IMR-90 (cell line): ENCODE measurements at regions of chr10 and their contacts with region 1.

Region 1: GRCh38 chr10:99854860-99855259 is 72.4 kb downstream of the ABCC2 start:
- DNase-seq: peak; percentile 83
- ATAC-seq: peak; percentile 82
- H3K4me3 ChIP-seq: no peak overlapping the region
- H3K27ac ChIP-seq: no peak overlapping the region
- H3K4me1 ChIP-seq: no peaks in the 10 kb centered on the region; the same call in 1 of the 2 replicates
- H3K27me3 ChIP-seq: peaks cover 2% of the 10 kb centered on the region
- CTCF ChIP-seq: peak; percentile 77
- POLR2A ChIP-seq: no peak
- RAD21 ChIP-seq: peak; percentile 86

Region 2: GRCh38 chr10:99966306-99966705 is 111.4 kb after region 1 on chr10:
- CTCF ChIA-PET with region 1: interaction called, 5 read pairs
- POLR2A ChIA-PET with region 1: no interaction called
- dilution Hi-C with region 1: no loop called
- in situ Hi-C with region 1: no loop called
- intact Hi-C with region 1: loop called (anchors 2 kb)
- DNase-seq: peak; percentile 78
- ATAC-seq: peak; percentile 66
- H3K4me3 ChIP-seq: no peak overlapping the region
- H3K27ac ChIP-seq: no peak overlapping the region
- H3K4me1 ChIP-seq: peaks cover 5% of the 10 kb centered on the region
- H3K27me3 ChIP-seq: no peaks in the 10 kb centered on the region
- CTCF ChIP-seq: no peak
- POLR2A ChIP-seq: no peak
- RAD21 ChIP-seq: no peak

Region 3: DNA sequence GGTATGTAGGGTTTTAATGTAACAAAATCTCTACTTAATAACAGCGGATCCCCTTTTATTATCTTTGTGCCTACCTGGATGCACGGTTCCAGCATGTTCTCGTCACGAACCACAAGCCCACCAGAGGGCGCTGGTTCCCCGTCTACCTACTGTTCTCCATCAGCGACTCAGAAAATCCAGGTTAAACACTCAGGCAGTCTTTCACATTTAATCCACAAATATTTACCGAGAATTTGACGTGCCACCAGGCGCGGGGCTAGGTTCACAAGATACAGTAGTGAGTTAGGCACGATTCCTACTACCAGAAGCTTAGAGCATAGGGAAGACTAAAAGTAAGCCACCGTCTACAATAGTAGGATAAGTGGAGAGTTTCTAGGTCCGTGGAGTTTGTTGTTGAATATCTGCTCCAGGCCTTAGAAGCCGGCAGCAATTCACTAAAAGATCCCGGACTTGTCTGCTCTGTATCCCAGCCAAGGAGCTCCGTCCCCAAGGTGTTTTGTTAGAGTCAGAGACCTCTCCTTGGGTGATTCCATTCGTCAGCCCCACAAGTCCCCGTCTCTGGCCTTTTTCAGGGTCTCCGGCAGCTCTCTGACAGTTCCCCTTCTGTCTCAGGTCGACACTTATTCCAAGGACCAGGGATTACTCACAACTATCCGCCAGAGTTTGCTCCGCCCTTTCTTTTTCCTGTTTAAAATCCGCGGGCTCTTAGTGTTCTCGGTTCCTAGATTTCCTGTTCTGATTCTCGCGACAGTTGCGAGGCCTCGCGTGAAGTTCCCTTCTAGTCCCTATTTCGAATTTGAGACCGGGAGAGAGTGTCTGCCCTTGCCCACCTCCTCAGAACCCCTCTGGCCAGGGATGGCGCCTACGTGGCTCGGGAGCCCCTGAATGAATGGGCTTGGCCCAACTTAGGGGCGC is 1205.4 kb after region 1 on chr10:
- CTCF ChIA-PET with region 1: no interaction called
- POLR2A ChIA-PET with region 1: interaction called, 15 read pairs
- dilution Hi-C with region 1: no loop called
- in situ Hi-C with region 1: no loop called
- intact Hi-C with region 1: no loop called
- DNase-seq: peak; percentile 95
- ATAC-seq: peak; percentile 68
- H3K4me3 ChIP-seq: peak overlapping the region; percentile 81
- H3K27ac ChIP-seq: peak overlapping the region; percentile 97
- H3K4me1 ChIP-seq: peaks cover 15% of the 10 kb centered on the region
- H3K27me3 ChIP-seq: no peaks in the 10 kb centered on the region
- CTCF ChIP-seq: peak; percentile 85
- POLR2A ChIP-seq: no peak
- RAD21 ChIP-seq: peak; percentile 79